Activated CD4-positive, alpha-beta T cell treated with anti-CD3 and anti-CD28 coated beads, Interleukin-2, amount 10 ng/mL, durations not matched to agents 24 days and 14 days (primary cell): ENCODE measurements at regions of chr6 and their contacts with region 1.

Region 1: GRCh38 chr6:90285611-90286381 is 10.8 kb downstream of the BACH2 start:
- DNase-seq: peak; percentile 87
- H3K4me3 Mint-ChIP-seq: peak overlapping the region; percentile 87
- H3K27ac Mint-ChIP-seq: peak overlapping the region; percentile 94
- H3K4me1 Mint-ChIP-seq: peaks cover 81% of the 10 kb centered on the region
- H3K27me3 Mint-ChIP-seq: no peaks in the 10 kb centered on the region

Region 2: GRCh38 chr6:89829591-89830385 is 456.0 kb before region 1 on chr6 and contains the start of gene CASP8AP2:
- intact Hi-C with region 1: loop called (anchors 10 kb)
- DNase-seq: peak; percentile 98
- H3K4me3 Mint-ChIP-seq: peak within 1 kb of the TSS; percentile 99
- H3K27ac Mint-ChIP-seq: peak within 1 kb of the TSS; percentile 98
- H3K4me1 Mint-ChIP-seq: peaks cover 25% of the 10 kb centered on the region
- H3K27me3 Mint-ChIP-seq: no peaks in the 10 kb centered on the region
- total RNA-seq, gene CASP8AP2: 37.3 and 37.8 TPM in 2 replicates

Region 3: DNA sequence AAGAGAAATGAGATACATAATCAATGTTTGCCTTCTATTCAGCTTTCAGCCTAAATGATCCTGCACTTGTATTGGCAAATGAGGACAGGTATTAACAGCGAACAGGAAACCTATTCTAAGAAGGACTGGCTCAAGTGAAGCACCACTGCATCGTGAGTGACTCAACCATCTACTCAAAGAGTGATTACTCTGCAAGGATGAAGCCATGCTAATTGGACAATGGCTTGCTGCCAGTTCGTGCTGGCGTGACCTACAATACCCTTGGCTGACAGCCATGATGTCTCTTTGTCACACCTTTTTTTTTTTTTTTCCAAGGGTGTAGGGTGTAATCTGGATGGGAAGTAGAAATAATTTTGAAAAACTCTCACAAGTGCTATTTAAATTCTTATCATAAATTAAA is 286.6 kb before region 1 on chr6:
- intact Hi-C with region 1: no loop called
- DNase-seq: no peak
- H3K4me3 Mint-ChIP-seq: no peak overlapping the region
- H3K27ac Mint-ChIP-seq: no peak overlapping the region
- H3K4me1 Mint-ChIP-seq: peaks cover 21% of the 10 kb centered on the region
- H3K27me3 Mint-ChIP-seq: no peaks in the 10 kb centered on the region

Region 4: GRCh38 chr6:90103056-90103800 is 182.6 kb before region 1 on chr6:
- intact Hi-C with region 1: loop called (anchors 1 kb)
- DNase-seq: peak; percentile 73
- H3K4me3 Mint-ChIP-seq: peak overlapping the region; percentile 64
- H3K27ac Mint-ChIP-seq: peak overlapping the region; percentile 88
- H3K4me1 Mint-ChIP-seq: peaks cover 60% of the 10 kb centered on the region
- H3K27me3 Mint-ChIP-seq: no peaks in the 10 kb centered on the region

Region 5: GRCh38 chr6:90197854-90198496 is 87.8 kb before region 1 on chr6:
- intact Hi-C with region 1: loop called (anchors 1 kb)
- DNase-seq: peak; percentile 58
- H3K4me3 Mint-ChIP-seq: no peak overlapping the region
- H3K27ac Mint-ChIP-seq: no peak overlapping the region
- H3K4me1 Mint-ChIP-seq: peaks cover 47% of the 10 kb centered on the region
- H3K27me3 Mint-ChIP-seq: no peaks in the 10 kb centered on the region

Region 6: DNA sequence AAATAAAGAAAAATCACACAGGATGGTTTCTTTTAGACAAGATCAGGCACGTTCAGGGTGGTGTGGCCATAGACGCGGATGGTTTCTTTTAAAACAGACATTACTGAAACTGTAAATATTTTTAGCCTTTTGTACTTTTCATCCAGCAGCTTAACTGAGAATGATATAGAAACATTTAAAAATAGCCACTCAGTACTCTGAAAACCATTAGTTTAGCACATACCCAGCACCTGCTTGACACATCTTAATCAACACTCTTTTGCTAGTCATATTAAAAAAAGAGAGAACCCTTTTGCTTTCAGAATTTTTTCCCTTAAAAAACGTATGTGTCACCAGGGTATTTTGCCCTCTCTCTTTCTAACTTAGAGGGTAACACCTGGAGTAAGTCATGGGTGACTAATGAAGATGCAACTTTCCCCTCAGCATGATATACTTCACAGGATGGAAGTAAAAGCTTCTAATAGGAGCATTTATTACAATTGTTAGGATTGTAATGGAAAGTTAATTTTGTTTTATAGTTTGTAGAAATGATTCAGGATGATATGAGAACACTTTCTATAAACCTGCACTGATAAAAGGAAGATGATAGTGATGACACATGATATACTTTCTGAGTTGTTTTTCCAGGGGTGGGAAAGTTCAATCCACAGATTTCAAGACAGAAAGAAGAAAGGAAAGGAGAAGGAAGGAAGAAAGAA is 34.4 kb before region 1 on chr6:
- intact Hi-C with region 1: loop called (anchors 1 kb)
- DNase-seq: peak; percentile 30
- H3K4me3 Mint-ChIP-seq: peak overlapping the region; percentile 49
- H3K27ac Mint-ChIP-seq: peak overlapping the region; percentile 95
- H3K4me1 Mint-ChIP-seq: peaks cover 68% of the 10 kb centered on the region
- H3K27me3 Mint-ChIP-seq: no peaks in the 10 kb centered on the region

Region 7: DNA sequence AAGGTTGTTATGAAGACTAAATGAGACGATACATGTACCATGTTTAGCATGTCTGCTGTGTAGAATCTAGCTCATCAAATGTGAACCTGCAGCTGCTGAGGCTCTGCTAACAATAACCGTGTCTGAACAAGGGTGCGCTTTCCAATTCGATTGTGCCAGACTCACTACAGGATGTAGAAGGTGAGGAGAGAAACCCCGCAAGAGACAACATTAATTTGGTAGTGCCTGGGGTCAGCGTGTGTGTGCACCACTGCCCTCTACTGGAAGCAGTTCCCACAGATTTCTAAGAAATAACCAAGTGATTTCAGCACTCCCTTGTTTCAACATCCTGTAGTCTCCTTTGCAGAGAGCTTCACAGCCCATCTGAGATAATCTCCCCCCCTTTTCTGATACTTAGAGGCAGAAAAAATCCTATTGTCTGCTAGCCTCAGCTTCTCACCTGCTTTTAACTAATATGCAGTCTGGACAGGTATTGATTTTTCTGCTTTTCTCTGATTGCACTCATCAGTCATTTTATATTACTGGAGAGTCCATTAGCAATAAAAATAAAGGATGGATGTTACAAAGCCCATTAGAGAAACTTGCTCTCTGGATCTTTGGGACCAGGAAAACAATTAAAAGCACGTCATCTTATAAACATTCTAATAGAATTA is 107.6 kb after region 1 on chr6:
- intact Hi-C with region 1: loop called (anchors 1 kb)
- DNase-seq: peak; percentile 93
- H3K4me3 Mint-ChIP-seq: no peak overlapping the region
- H3K27ac Mint-ChIP-seq: peak overlapping the region; percentile 35
- H3K4me1 Mint-ChIP-seq: peaks cover 60% of the 10 kb centered on the region
- H3K27me3 Mint-ChIP-seq: no peaks in the 10 kb centered on the region

Region 8: DNA sequence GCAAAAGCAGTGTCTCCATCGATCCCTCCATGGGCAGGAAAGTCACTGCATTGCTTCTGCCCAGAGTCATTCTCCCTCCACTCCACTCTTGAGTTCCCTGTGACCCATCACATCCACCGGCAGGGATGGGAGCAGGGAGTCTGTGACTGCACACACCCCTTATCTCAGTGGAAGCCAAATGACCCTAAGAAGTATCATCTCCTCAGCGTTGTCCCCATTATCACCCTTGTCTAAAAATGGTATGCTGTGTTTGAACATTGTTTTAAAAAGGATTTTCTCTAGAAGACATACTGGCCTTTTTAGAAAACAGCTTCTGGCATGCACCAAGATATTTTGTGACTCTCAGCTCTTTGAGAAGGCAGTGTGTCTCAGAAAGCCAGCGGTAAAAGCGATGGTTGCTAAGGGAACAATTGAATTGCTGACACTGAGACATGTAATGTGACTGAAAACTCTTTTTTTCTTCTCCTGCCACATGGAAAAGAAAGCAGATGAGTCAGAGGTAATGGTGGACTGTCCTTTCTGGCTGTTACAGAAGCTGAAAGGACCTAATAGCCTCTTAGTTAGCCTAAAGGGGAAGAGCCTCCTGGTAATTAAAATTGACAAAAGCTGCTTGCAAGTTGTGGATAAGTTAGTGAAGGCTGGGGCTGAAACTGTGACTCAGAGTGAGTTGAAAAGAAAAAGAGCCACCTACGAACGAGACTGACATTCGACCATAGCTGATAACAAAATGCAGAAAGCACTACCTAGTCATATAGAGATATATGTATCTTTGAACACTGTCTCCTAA is 180.6 kb after region 1 on chr6:
- intact Hi-C with region 1: loop called (anchors 2 kb)
- DNase-seq: peak; percentile 82
- H3K4me3 Mint-ChIP-seq: peak overlapping the region; percentile 46
- H3K27ac Mint-ChIP-seq: peak overlapping the region; percentile 90
- H3K4me1 Mint-ChIP-seq: peaks cover 80% of the 10 kb centered on the region
- H3K27me3 Mint-ChIP-seq: no peaks in the 10 kb centered on the region